CD8-positive, alpha-beta memory T cell (primary cell): ENCODE measurements at regions of chr1 and their contacts with region 1.

Region 1: GRCh38 chr1:27671964-27672749 is at the start of gene IFI6:
- DNase-seq: peak; percentile 64 to 84 (median 82)
- H3K4me3 ChIP-seq: peak within 1 kb of the TSS; percentile 68
- H3K4me3 Mint-ChIP-seq: peak within 1 kb of the TSS; percentile 89 to 98 (median 94)
- H3K27ac ChIP-seq: peak within 1 kb of the TSS; percentile 70
- H3K27ac Mint-ChIP-seq: peak within 1 kb of the TSS; percentile 91 to 100 (median 98)
- H3K4me1 ChIP-seq: peaks cover 29% of the 10 kb centered on the region
- H3K4me1 Mint-ChIP-seq: peaks cover 33 to 38% (median 34%) of the 10 kb centered on the region in 3 donors
- H3K27me3 ChIP-seq: no peaks in the 10 kb centered on the region
- H3K27me3 Mint-ChIP-seq: no peaks in the 10 kb centered on the region
- total RNA-seq, gene IFI6: 10.7 to 12.3 TPM

Region 2: DNA sequence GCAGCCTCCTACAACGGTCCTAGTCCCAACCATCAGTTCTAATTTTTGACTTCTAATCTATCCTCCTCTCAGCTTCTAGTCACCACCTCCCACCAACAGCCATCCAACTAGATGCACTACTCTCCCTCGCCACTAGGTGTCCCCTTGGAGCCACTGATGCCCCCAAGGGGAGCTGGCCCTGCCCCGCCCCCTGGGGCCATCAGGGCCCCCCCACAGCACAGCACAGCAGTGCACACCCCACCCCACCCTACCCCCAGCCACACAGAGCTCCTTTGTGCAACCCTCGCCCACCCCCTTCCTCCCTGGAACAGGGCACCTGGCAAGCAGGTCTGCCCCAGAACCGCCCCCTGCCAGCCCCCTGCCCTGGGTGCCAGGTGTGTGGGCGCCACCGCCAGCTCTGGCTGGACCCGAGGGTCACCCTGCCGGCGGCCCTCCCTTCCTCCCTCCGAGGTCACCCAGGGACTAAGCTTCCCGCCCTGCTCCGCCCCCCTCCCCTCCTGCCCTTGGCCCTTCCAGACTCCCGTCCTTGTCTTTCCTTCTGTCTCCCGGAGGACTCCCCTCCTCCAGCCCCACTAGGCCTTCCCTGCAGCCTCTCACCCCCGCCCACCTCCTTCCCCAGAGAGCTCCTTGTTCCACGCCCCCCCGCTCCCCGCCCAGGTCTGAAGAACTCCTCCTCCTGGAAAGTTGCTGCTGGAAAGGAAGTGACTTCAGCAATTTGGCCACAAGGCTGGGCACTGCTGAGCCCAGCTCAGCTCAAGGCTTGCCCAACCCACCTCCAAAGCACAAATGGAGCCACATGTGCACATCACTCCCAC is 115.2 kb before region 1 on chr1:
- CTCF ChIA-PET with region 1: interaction called, 10 read pairs
- POLR2A ChIA-PET with region 1: no interaction called
- DNase-seq: peak; percentile 58 to 82 (median 69)
- H3K4me3 ChIP-seq: peak overlapping the region; percentile 36
- H3K4me3 Mint-ChIP-seq: peak overlapping the region in 5 of 7 donors; percentile 1 to 42 (median 17)
- H3K27ac ChIP-seq: peak overlapping the region; percentile 25
- H3K27ac Mint-ChIP-seq: peak overlapping the region; percentile 12 to 82 (median 47)
- H3K4me1 ChIP-seq: peaks cover 26% of the 10 kb centered on the region
- H3K4me1 Mint-ChIP-seq: peaks cover 20 to 36% (median 20%) of the 10 kb centered on the region in 3 donors
- H3K27me3 ChIP-seq: no peaks in the 10 kb centered on the region
- H3K27me3 Mint-ChIP-seq: no peaks in the 10 kb centered on the region

Region 3: DNA sequence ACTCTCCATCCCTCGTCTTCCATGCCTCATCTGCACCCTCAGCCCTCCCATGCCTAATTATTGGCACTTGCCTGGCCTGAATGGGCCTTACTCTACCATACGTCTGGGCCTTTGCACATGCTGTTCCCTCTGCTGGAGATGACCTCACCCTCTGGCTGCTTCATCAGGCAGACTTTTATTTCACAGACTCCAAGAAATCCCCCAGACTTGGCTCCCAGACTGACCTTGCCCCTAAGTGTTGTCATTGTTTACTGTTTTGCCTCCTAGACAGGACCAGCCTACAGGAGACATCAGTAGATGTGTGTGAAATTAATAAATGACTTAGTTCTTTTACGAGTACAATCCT is 63.0 kb before region 1 on chr1:
- CTCF ChIA-PET with region 1: interaction called, 77 read pairs
- POLR2A ChIA-PET with region 1: no interaction called
- DNase-seq: no peak
- H3K4me3 ChIP-seq: peak overlapping the region; percentile 26
- H3K4me3 Mint-ChIP-seq: no peak overlapping the region
- H3K27ac ChIP-seq: no peak overlapping the region
- H3K27ac Mint-ChIP-seq: no peak overlapping the region
- H3K4me1 ChIP-seq: peaks cover 64% of the 10 kb centered on the region
- H3K4me1 Mint-ChIP-seq: peaks cover 18 to 37% (median 33%) of the 10 kb centered on the region in 3 donors
- H3K27me3 ChIP-seq: no peaks in the 10 kb centered on the region
- H3K27me3 Mint-ChIP-seq: no peaks in the 10 kb centered on the region

Region 4: DNA sequence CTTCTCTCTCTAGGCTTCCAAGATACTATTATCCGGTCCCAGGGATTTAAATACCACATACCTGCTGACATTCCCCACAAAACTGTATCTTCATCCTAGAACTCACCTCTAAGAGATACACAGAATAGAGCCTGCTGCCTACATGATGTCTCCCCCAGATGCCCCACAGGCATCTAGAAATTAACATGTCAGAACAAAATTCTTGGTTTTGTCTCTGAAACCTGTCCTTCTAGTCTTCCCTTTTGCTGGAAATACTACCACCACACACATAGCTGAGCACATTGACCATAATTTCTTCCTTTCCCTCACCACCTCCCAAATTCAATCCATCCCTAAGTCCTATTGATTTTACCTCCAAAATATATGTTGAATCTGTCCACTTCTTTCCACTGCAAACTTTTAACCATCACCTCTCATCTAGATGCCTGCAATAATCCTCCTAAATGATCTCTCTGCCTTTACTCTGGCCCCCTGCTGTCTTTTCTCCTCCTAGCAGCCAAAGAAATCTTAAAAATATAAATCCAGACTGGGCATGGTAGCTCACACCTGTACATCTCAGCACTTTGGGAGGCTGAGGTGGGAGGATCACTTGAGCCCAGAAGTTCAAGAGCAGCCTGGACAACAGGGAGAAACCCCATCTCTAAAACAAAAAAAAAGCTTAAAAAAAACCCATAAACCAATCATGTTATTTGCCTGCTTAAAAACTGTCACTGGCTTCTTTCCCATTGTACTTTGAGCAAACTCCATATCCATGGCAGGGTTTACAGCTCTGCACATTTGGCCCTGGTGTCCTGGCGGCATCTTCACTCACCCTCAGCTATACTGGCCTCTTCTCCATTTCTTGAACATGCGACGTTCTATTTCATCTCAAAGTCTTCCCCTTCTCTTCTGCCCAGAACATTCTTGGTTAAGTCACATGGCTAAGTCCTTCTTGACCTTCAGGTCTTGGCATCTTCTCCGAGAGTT is 47.4 kb after region 1 on chr1:
- CTCF ChIA-PET with region 1: interaction called, 32 read pairs
- POLR2A ChIA-PET with region 1: no interaction called
- DNase-seq: peak in 1 of 5 donors; percentile 7
- H3K4me3 ChIP-seq: no peak overlapping the region
- H3K4me3 Mint-ChIP-seq: peak overlapping the region in 1 of 7 donors; percentile 10
- H3K27ac ChIP-seq: no peak overlapping the region
- H3K27ac Mint-ChIP-seq: no peak overlapping the region
- H3K4me1 ChIP-seq: no peaks in the 10 kb centered on the region
- H3K4me1 Mint-ChIP-seq: peaks cover 0 to 1% (median under 1%) of the 10 kb centered on the region in 3 donors
- H3K27me3 ChIP-seq: no peaks in the 10 kb centered on the region
- H3K27me3 Mint-ChIP-seq: peaks cover 20 to 29% of the 10 kb centered on the region in 2 donors

Region 5: DNA sequence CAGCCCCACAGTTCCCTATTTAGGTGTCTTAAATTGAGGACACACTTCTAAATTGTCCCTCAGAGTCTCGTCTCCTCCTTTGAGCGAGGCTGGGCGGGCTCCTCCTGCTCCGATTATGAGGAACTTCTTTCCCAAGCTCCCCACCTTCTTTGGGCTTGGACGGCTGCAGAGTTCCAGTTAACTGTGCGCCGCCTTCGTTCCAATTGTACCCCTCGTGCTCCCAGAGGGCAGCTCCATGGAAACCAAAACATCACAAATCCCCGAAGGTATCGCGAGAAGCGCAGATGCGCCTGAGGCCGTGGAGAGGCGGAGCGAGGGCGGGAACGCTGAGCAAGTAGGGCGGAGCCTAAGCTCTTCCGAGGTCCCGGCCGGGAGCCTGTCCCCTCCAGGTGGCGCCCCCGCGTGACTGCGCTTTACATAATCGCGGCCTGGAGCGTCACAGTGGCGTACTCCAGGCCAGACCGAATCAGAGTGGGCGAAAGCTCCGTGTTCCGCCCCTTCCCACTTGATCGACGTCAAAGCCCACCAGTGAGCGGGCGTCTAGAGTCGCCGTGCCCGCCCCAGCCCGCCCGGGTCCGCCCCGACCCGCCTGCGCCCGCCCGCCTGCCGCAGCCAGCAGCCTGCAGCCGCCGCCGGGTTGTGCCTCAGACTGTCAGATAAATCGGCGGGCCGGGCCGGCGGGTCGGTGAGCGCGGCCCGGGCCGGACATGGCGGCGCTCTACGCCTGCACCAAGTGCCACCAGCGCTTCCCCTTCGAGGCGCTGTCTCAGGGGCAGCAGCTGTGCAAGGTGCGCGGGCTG is 53.4 kb after region 1 on chr1 and contains the start of gene FAM76A:
- CTCF ChIA-PET with region 1: interaction called, 32 read pairs
- POLR2A ChIA-PET with region 1: interaction called, 22 read pairs
- DNase-seq: peak; percentile 99 to 100 (median 100)
- H3K4me3 ChIP-seq: peak within 1 kb of the TSS; percentile 66
- H3K4me3 Mint-ChIP-seq: peak within 1 kb of the TSS; percentile 87 to 95 (median 91)
- H3K27ac ChIP-seq: peak within 1 kb of the TSS; percentile 87
- H3K27ac Mint-ChIP-seq: peak within 1 kb of the TSS; percentile 94 to 99 (median 98)
- H3K4me1 ChIP-seq: peaks cover 18% of the 10 kb centered on the region
- H3K4me1 Mint-ChIP-seq: peaks cover 21 to 35% (median 24%) of the 10 kb centered on the region in 3 donors
- H3K27me3 ChIP-seq: no peaks in the 10 kb centered on the region
- H3K27me3 Mint-ChIP-seq: no peaks in the 10 kb centered on the region
- total RNA-seq, gene FAM76A: 13.2 to 13.7 TPM